Psoas muscle (tissue), 8 donors: ENCODE measurements at regions of chr9 and their contacts with region 1.

Region 1: DNA sequence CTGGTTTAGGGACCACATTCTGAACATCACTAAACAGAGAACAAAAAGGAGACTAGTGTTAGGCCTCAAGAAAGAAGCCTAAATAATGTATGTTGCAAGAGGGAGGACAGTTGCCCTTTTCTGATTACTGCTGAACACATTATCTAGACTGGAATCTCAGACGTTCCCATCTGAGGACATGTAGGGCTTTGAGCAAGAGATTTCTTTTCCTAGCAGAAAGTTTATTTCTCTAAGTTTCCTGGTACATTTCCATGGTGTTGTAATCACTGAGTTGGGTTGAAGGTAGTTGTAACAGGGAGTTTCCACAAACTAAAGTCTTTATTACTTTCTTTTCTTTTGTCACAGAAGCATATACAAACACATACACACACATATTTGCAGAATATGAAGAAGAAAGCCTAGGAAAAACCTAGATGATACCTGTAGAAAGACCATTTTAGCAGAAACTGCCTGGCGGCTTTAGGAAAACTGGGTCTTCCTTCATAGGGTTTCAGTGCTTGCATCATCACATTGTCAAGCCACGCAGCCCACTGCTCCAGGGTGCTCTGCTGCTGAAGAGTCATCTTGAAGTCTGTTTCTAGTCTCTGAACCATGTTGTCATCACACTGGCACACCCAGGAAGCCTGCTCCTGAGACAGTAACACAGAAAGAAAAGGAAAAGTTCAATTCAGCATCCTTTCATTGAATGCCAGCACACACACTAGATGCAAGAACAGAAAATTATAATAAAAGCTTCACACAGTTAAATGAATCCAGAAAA is 269.1 kb downstream of the RFX3 start:
- DNase-seq: no peak
- ATAC-seq: no peak
- H3K4me3 ChIP-seq: no peak overlapping the region
- H3K27ac ChIP-seq: no peak overlapping the region
- H3K4me1 ChIP-seq: no peaks in the 10 kb centered on the region
- H3K27me3 ChIP-seq: no peaks in the 10 kb centered on the region
- CTCF ChIP-seq: no peak

Region 2: DNA sequence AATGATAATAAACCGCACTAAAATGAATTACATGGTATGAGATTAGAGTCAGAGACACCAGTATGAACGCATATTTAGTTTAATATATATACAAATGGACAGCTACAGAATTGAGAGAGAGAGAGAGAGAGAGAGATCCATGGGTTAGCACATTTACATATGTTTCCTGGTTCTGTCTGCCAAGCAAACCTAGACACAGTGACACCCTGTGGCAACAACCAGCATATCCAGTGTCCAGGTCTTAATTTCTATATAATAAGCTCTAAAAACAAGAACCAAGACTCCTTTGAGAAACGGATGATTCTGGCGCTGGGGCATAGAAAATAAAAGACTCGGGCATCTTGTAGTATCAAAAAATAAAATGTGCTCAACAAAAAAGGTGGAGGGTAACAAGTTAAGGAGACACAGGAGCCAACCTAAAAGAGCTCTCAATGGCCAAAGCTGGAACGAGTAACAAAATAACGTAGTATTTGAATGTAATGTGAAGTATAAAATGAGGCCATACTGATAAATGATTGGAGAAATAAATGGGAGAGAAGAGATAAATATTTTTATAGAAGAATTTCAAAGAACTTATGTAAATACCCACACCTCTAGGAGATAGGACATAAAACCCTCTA is 184.6 kb after region 1 on chr9:
- intact Hi-C with region 1: loop called in 1 of 2 experiments (anchors 10 kb)
- DNase-seq: no peak
- ATAC-seq: peak in 3 of 4 donors; percentile 70 to 78 (median 73)
- H3K4me3 ChIP-seq: no peak overlapping the region
- H3K27ac ChIP-seq: no peak overlapping the region
- H3K4me1 ChIP-seq: peaks cover 11% of the 10 kb centered on the region
- H3K27me3 ChIP-seq: no peaks in the 10 kb centered on the region
- CTCF ChIP-seq: peak; percentile 47